Activated CD8-positive, alpha-beta T cell treated with anti-CD3 and anti-CD28 coated beads for 36 hours (primary cell): ENCODE measurements at regions of chr12 and their contacts with region 1.

Region 1: DNA sequence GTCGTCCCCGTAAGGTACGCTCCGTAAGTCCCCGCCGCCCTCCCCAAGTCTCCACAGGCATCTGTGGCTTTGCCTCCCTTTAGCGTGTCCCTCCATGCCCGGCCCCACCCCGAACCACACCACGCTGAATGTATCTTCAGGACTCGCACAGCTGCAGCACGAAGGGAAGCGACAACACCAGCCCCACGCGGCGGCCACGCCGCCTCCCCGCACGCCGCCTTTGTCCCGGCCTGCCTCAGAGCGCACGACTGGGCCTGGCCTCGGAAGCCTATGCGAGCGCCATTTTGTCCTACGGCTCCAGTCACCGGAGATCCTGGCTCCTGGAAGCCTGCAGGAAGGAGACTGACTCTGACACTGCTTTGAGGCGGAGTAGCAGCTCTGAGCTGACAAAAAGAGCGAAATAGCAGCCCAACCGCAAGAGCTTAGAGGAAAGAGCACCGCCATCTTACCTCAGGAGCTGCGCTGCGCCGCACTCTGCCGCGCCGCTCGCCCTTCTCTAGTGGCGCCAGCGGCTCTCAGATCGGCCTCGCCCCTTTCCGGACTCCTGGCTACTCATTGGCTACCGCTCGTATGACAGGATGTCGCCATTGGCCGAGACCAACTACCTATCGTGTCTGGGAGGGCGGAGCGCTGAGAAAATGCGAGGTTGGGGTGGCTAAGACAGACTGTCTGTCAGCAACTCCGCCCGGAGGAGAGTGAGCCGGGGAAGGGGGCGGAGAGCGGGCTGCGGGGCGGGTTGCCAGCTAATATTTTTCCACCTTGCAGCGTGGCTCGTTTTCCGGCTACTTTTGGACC is at the start of gene KANSL2:
- DNase-seq: peak; percentile 99
- ATAC-seq: peak; percentile 98
- H3K4me3 Mint-ChIP-seq: peak within 1 kb of the TSS; percentile 99
- H3K27ac Mint-ChIP-seq: peak within 1 kb of the TSS; percentile 96
- H3K4me1 Mint-ChIP-seq: peaks cover 45% of the 10 kb centered on the region
- H3K27me3 Mint-ChIP-seq: no peaks in the 10 kb centered on the region
- CTCF ChIP-seq: no peak
- total RNA-seq, gene KANSL2: 45.9 to 47.3 TPM

Region 2: DNA sequence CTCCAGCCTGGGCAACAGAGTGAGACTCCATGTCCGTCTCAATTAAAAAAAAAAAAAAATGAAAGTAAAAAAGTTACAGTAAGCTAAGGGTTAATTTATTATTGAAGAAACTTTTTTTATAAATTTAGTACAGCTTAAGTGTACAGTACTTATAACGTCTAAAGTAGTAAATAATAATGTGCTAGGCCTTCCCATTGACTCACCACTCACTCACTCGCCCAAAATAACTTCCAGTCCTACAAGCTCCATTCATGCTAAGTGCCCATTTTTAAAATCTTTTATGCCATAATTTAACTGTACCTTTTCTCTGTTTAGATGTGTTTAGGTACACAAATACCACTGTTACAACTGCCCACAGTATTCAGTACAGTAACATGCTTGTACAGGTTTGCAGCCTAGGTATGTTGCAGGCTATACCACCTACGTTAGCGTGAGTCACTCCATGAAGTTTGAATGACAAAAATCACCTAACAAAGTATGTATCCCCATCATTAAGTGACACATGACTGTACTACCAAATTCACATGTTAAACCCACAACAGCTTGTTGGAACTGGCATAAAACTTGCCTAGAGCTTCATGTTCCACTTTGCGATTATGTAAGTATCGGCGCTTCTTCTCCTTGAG is 10.6 kb before region 1 on chr12:
- CTCF ChIA-PET with region 1: interaction called, 3 read pairs
- POLR2A ChIA-PET with region 1: interaction called, 41 read pairs
- intact Hi-C with region 1: no loop called
- DNase-seq: no peak
- ATAC-seq: no peak
- H3K4me3 Mint-ChIP-seq: no peak overlapping the region
- H3K27ac Mint-ChIP-seq: no peak overlapping the region
- H3K4me1 Mint-ChIP-seq: peaks cover 10% of the 10 kb centered on the region
- H3K27me3 Mint-ChIP-seq: no peaks in the 10 kb centered on the region
- CTCF ChIP-seq: no peak

Region 3: GRCh38 chr12:48696626-48697025 is 14.7 kb after region 1 on chr12:
- CTCF ChIA-PET with region 1: interaction called, 3 read pairs
- POLR2A ChIA-PET with region 1: interaction called, 15 read pairs
- intact Hi-C with region 1: no loop called
- DNase-seq: no peak
- ATAC-seq: no peak
- H3K4me3 Mint-ChIP-seq: no peak overlapping the region
- H3K27ac Mint-ChIP-seq: no peak overlapping the region
- H3K4me1 Mint-ChIP-seq: peaks cover 11% of the 10 kb centered on the region
- H3K27me3 Mint-ChIP-seq: no peaks in the 10 kb centered on the region
- CTCF ChIP-seq: no peak

Region 4: GRCh38 chr12:48716493-48717251 is 34.7 kb after region 1 on chr12 and contains the start of gene CCNT1:
- CTCF ChIA-PET with region 1: no interaction called
- POLR2A ChIA-PET with region 1: interaction called, 34 read pairs
- intact Hi-C with region 1: no loop called
- DNase-seq: peak; percentile 100
- ATAC-seq: peak; percentile 94
- H3K4me3 Mint-ChIP-seq: peak within 1 kb of the TSS; percentile 94
- H3K27ac Mint-ChIP-seq: peak within 1 kb of the TSS; percentile 97
- H3K4me1 Mint-ChIP-seq: peaks cover 32% of the 10 kb centered on the region
- H3K27me3 Mint-ChIP-seq: no peaks in the 10 kb centered on the region
- CTCF ChIP-seq: no peak
- total RNA-seq, gene CCNT1: 68.7 to 73.8 TPM